ENCODE measurements at regions of chr13 and their contacts with region 1.

Region 1: GRCh38 chr13:24922745-24923591 is 159.0 kb downstream of the RNF17 start:
- DNase-seq: peak; percentile 95 to 99 (median 98)
- H3K4me3 ChIP-seq: peak overlapping the region; percentile 60 to 100 (median 89)
- H3K27ac ChIP-seq: peak overlapping the region in 58 of 59 donors; percentile 43 to 99 (median 91)
- H3K27me3 ChIP-seq: peaks cover 0 to 7% (median 0%) of the 10 kb centered on the region in 45 donors
- CTCF ChIP-seq: peak in 52 of 56 donors; percentile 4 to 76 (median 47)

Region 2: GRCh38 chr13:24982333-24982999 is 59.5 kb after region 1 on chr13:
- intact Hi-C with region 1: loop called in 1 of 2 experiments (anchors 10 kb)
- DNase-seq: peak in 1 of 10 donors; percentile 89
- H3K4me3 ChIP-seq: no peak overlapping the region
- H3K27ac ChIP-seq: peak overlapping the region in 13 of 59 donors; percentile 0 to 73 (median 54)
- H3K27me3 ChIP-seq: peaks cover 0 to 24% (median 0%) of the 10 kb centered on the region in 45 donors
- CTCF ChIP-seq: no peak

Region 3: GRCh38 chr13:25095862-25096453 is 173.0 kb after region 1 on chr13 and contains the start of gene PABPC3:
- intact Hi-C with region 1: no loop called
- DNase-seq: no peak
- H3K4me3 ChIP-seq: peak within 1 kb of the TSS in 58 of 59 donors; percentile 1 to 66 (median 50)
- H3K27ac ChIP-seq: no peak within 1 kb of the TSS
- H3K27me3 ChIP-seq: peaks cover 0 to 14% (median 0%) of the 10 kb centered on the region in 45 donors
- CTCF ChIP-seq: no peak
- total RNA-seq, gene PABPC3: 0.13 to 0.88 (median 0.33) TPM in 109 of 120 experiments, not detected in the others

Region 4: DNA sequence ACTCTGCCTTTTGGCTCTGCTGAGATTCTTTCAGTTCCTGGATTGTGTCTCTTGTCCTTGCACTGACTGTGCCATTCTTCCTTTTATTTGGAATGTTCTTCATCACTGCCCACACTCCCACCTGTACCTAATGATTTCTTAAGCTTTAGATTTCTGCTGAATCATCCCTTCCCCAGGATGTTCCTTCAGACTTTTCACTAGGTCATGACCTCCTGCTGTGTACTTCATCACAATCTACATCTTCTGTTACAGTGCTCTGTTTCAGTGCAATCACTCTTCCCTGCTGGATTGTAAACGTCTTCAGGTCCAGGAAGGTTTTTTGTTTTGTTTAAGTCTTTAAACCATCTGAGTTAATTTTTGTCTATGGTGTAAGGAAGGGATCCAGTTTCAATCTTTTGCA is 729.8 kb after region 1 on chr13:
- intact Hi-C with region 1: no loop called
- DNase-seq: no peak
- H3K4me3 ChIP-seq: no peak overlapping the region
- H3K27ac ChIP-seq: no peak overlapping the region
- H3K27me3 ChIP-seq: no peaks in the 10 kb centered on the region
- CTCF ChIP-seq: no peak

Measured in dorsolateral prefrontal cortex (tissue), 120 donors.